A673 (cell line): ENCODE measurements at regions of chr1 and their contacts with region 1.

Region 1: DNA sequence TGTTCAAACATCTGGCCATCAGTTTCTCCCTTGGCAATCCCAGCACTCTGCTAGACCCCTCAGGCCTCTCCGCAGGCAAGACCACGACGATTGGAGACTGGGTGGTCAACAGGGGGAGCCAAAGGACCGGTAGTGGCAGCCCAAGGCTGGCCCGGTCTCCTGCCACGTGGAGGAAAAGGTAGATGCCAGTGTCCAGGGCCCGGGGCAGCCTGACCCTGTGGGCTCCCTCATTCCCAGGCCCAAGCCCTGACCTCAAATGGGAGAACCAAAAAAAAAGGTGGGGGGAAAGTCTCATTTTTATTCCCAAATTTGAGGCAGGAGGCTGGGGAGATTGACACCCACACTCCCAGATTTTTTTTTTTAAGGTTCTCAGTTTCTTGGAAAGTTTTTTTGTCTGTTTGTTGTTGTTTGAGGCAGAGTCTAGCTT is 24.8 kb downstream of the S100A6 start:
- DNase-seq: peak; percentile 81
- H3K4me3 ChIP-seq: no peak overlapping the region
- H3K27ac ChIP-seq: no peak overlapping the region
- H3K4me1 ChIP-seq: no peaks in the 10 kb centered on the region
- H3K27me3 ChIP-seq: no peaks in the 10 kb centered on the region
- CTCF ChIP-seq: peak; percentile 95

Region 2: DNA sequence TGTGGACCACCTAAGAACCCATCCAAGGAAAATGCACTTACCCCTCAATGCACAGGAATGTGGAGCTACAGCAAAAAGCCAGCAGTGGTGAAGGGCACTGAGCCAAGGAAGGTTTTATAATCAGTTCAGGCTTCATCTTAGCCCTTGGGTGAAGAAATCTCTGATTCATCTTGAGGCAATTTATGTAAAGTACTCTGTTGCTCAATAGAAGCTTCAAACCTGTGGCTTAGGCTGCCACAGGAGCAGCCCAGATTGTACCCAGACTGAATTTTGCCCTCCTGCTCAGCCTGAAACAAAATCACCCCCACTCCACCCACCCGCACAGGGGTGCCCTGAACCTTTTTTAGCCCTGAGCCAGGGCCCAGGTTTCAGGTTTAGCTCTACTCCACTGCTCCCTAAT is 135.5 kb before region 1 on chr1 and contains the start of gene S100A12:
- CTCF ChIA-PET with region 1: no interaction called
- POLR2A ChIA-PET with region 1: no interaction called
- intact Hi-C with region 1: no loop called
- DNase-seq: peak; percentile 30
- H3K4me3 ChIP-seq: no peak within 1 kb of the TSS
- H3K27ac ChIP-seq: no peak within 1 kb of the TSS
- H3K4me1 ChIP-seq: no peaks in the 10 kb centered on the region
- H3K27me3 ChIP-seq: peaks cover 43% of the 10 kb centered on the region
- CTCF ChIP-seq: no peak
- total RNA-seq, gene S100A12: not detected in 2 replicates

Region 3: DNA sequence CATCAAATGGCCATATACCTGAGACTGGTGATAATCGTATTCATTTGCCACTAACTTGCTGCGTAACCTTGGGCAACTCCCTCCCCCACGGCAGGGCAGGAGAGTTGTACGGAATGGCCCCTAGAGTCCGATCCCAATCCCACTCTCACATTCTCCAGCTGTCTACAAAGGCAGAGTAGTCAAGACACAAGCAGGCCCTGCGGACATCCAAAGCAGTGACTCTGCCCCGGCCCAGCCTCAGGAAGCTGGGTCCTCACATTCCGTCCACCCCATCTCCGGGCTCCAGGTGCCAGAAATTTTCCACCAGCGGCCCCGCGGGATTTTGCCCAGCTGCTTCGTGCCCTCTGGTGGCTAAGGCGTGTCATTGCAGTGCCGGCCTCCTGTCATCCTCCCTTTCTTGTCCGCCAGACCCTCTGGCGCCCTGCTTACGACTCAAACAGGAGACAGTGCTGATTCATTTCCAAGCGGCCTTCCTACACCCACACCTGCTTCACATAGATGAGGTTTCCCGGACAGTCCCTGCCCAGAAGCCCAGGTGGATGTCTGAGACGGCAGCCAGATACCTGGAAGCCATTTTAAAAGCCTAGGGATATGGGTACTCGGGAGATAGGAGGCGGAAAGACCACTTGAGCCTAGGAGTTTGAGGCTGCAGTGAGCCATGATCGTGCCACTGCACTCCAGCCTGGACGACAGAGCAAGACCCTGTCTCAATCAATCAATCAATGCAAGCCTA is 57.5 kb after region 1 on chr1:
- CTCF ChIA-PET with region 1: interaction called, 5 read pairs
- POLR2A ChIA-PET with region 1: no interaction called
- intact Hi-C with region 1: loop called (anchors 2 kb)
- DNase-seq: peak; percentile 91
- H3K4me3 ChIP-seq: no peak overlapping the region
- H3K27ac ChIP-seq: no peak overlapping the region
- H3K4me1 ChIP-seq: peaks cover 26% of the 10 kb centered on the region
- H3K27me3 ChIP-seq: no peaks in the 10 kb centered on the region
- CTCF ChIP-seq: peak; percentile 98

Region 4: DNA sequence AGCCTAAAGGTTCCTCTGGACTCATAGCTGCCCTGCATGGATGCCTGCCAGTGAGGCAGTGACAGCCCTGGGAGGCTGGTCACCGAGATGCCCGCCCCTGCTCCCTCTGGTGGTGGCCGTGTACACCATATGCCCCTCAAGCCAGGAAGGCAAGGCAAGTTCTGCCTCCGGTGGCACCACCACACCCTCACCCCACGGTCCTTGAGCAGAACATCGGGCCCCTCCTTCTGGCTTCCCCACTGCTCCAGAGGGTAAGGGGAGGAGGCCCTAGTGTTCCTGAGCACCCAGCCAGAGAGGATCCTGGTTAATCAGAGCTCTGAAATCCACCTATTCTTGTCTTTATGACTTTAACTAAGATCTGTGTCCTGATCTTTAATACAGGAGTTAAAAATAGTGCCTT is 106.7 kb after region 1 on chr1:
- CTCF ChIA-PET with region 1: interaction called, 7 read pairs
- POLR2A ChIA-PET with region 1: no interaction called
- intact Hi-C with region 1: loop called (anchors 2 kb)
- DNase-seq: peak; percentile 66
- H3K4me3 ChIP-seq: no peak overlapping the region
- H3K27ac ChIP-seq: no peak overlapping the region
- H3K4me1 ChIP-seq: no peaks in the 10 kb centered on the region
- H3K27me3 ChIP-seq: no peaks in the 10 kb centered on the region
- CTCF ChIP-seq: peak; percentile 69

Region 5: DNA sequence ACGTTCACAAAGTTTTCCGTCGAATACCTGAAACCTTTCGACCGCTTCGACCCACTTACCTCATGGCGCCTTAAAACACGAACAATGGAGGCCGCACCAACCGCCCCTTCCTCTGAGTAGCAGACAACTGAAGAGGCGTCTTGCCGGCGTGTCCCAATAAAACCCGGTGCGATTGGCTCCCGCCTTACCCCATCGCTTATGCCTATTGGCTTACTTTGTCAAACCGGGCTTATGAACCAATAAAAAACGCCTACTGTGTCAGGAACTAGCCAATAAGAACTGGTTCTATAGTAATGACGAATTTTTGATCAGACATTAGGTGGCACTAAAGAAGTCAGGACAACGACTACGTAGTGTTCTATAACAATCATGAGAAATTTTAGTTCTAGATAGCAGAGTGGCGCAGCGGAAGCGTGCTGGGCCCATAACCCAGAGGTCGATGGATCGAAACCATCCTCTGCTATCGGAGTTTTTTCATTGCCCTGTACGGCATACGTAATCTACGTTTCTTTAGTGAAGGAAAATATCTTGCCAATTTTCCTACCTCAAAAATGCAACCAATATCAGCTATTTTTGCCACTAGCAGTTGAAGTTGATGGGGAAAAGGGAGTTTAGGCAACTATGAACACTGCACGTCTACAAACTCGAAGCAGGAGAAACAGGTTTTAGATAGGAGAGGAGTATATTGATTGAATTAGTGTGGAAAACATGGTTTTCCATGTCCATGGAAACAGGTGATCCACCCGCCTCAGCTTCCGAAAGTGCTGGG is 160.0 kb after region 1 on chr1 and contains the start of gene ILF2:
- CTCF ChIA-PET with region 1: no interaction called
- POLR2A ChIA-PET with region 1: no interaction called
- intact Hi-C with region 1: loop called (anchors 5 kb)
- DNase-seq: peak; percentile 99
- H3K4me3 ChIP-seq: peak within 1 kb of the TSS; percentile 70
- H3K27ac ChIP-seq: peak within 1 kb of the TSS; percentile 85
- H3K4me1 ChIP-seq: peaks cover 8% of the 10 kb centered on the region
- H3K27me3 ChIP-seq: no peaks in the 10 kb centered on the region
- CTCF ChIP-seq: peak; percentile 41; the same call in 1 of the 2 replicates
- total RNA-seq, gene ILF2: 391 and 420 TPM in 2 replicates

Region 6: DNA sequence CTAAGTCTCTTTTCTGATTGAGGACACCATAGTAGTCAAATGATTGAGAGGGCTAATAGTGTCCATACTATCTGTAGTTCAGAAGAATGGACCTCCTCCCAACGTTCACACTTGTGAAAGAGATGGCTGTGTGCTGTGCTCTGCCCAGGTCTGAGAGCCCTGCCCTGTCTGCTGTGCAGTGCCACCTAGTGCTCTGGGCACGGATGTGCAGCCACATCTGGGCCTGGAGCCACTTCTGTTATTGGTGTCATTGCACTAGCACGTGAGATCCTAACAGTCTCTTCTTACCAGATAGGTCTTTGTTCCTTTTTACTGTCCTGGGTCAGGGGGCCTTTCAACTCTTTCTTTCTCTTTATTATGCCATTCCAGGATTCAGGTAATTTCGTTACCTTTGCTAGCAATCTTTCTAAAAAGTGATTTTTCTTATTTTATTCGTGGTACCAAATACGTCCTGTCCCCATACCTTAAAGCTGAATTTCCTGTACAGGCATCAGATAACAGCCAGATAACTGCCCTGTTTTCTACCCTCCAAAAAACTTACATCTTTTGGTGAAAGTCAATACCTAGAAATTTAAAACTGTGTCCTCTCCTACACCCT is 238.5 kb after region 1 on chr1:
- CTCF ChIA-PET with region 1: no interaction called
- POLR2A ChIA-PET with region 1: no interaction called
- intact Hi-C with region 1: loop called (anchors 1 kb)
- DNase-seq: peak; percentile 85
- H3K4me3 ChIP-seq: no peak overlapping the region
- H3K27ac ChIP-seq: no peak overlapping the region
- H3K4me1 ChIP-seq: no peaks in the 10 kb centered on the region
- H3K27me3 ChIP-seq: no peaks in the 10 kb centered on the region
- CTCF ChIP-seq: peak; percentile 98

Region 7: DNA sequence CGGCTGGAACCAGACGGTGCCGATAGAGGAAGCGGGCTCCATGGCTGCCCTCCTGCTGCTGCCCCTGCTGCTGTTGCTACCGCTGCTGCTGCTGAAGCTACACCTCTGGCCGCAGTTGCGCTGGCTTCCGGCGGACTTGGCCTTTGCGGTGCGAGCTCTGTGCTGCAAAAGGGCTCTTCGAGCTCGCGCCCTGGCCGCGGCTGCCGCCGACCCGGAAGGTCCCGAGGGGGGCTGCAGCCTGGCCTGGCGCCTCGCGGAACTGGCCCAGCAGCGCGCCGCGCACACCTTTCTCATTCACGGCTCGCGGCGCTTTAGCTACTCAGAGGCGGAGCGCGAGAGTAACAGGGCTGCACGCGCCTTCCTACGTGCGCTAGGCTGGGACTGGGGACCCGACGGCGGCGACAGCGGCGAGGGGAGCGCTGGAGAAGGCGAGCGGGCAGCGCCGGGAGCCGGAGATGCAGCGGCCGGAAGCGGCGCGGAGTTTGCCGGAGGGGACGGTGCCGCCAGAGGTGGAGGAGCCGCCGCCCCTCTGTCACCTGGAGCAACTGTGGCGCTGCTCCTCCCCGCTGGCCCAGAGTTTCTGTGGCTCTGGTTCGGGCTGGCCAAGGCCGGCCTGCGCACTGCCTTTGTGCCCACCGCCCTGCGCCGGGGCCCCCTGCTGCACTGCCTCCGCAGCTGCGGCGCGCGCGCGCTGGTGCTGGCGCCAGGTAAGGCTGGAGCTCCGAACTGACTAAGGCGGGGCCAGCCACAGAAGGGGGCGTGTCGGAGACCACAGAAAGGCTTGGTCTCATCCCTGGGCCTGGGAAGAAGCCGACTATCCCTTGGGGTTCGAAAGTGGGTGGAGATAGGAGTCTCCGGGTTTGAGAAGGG is 264.7 kb after region 1 on chr1:
- CTCF ChIA-PET with region 1: no interaction called
- POLR2A ChIA-PET with region 1: no interaction called
- intact Hi-C with region 1: loop called (anchors 10 kb)
- DNase-seq: peak; percentile 83
- H3K4me3 ChIP-seq: peak overlapping the region; percentile 71
- H3K27ac ChIP-seq: no peak overlapping the region
- H3K4me1 ChIP-seq: peaks cover 14% of the 10 kb centered on the region
- H3K27me3 ChIP-seq: no peaks in the 10 kb centered on the region
- CTCF ChIP-seq: no peak